Gastrocnemius medialis (tissue), 4 donors: ENCODE measurements at regions of chr11 and their contacts with region 1.

Region 1: GRCh38 chr11:17978553-17979287 is 34.1 kb downstream of the SERGEF start:
- DNase-seq: peak; percentile 12 to 68
- ATAC-seq: peak; percentile 81 to 88
- H3K4me3 ChIP-seq: no peak overlapping the region
- H3K27ac ChIP-seq: no peak overlapping the region
- H3K4me1 ChIP-seq: peaks cover 0 to 5% of the 10 kb centered on the region in 2 donors
- H3K27me3 ChIP-seq: no peaks in the 10 kb centered on the region
- CTCF ChIP-seq: peak; percentile 65 to 80 (median 73)
- POLR2A ChIP-seq: no peak

Region 2: GRCh38 chr11:17598700-17599459 is 379.8 kb before region 1 on chr11:
- in situ Hi-C with region 1: loop called (anchors 5 to 10 kb)
- intact Hi-C with region 1: loop called (anchors 2 kb)
- DNase-seq: peak; percentile 54 to 62
- ATAC-seq: peak; percentile 87 to 90
- H3K4me3 ChIP-seq: no peak overlapping the region
- H3K27ac ChIP-seq: no peak overlapping the region
- H3K4me1 ChIP-seq: peaks cover 0 to 3% of the 10 kb centered on the region in 2 donors
- H3K27me3 ChIP-seq: no peaks in the 10 kb centered on the region
- CTCF ChIP-seq: peak; percentile 90 to 97 (median 96)
- POLR2A ChIP-seq: no peak

Region 3: DNA sequence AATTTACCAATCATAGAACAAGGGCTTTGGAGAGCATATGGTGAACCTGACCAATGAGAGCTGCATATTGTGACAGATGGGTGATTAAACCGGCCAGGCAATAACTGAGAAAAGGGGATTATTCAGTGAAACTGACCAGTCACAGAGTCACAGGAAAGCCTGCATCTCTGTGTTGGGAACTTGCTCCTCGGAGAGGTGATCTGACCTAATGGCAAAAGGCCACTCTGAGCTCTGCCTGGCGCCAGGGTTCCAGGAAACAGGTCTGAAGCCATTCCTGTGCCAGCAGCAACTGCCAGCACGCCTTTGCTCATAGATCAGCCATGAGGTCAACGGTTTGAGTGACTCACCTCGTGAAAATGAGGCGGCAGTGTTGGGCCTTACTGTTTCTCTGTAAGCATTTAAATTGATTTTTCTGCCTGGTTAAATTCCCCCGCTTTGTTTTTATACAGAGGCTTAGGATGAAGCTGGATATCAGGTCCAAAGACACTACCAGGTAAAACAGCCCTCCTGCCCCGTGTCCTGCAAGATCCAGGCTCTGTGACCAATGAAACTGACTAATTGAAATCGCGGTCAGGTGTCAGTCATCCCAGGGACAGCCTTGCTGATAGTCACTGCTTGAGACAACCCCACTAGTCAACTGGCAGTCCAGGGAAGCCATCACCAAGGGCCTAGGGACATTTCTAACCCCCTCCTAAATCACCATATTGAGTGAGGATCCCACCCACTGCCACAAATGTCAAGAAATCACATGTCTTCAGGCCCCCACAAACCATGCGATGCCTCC is 295.1 kb before region 1 on chr11:
- in situ Hi-C with region 1: no loop called
- intact Hi-C with region 1: no loop called
- DNase-seq: peak; percentile 58 to 87
- ATAC-seq: peak; percentile 69 to 71
- H3K4me3 ChIP-seq: no peak overlapping the region
- H3K27ac ChIP-seq: peak overlapping the region; percentile 80 to 87 (median 82)
- H3K4me1 ChIP-seq: peaks cover 56 to 61% of the 10 kb centered on the region in 2 donors
- H3K27me3 ChIP-seq: no peaks in the 10 kb centered on the region
- CTCF ChIP-seq: no peak
- POLR2A ChIP-seq: peak in 1 of 2 donors; percentile 26

Region 4: DNA sequence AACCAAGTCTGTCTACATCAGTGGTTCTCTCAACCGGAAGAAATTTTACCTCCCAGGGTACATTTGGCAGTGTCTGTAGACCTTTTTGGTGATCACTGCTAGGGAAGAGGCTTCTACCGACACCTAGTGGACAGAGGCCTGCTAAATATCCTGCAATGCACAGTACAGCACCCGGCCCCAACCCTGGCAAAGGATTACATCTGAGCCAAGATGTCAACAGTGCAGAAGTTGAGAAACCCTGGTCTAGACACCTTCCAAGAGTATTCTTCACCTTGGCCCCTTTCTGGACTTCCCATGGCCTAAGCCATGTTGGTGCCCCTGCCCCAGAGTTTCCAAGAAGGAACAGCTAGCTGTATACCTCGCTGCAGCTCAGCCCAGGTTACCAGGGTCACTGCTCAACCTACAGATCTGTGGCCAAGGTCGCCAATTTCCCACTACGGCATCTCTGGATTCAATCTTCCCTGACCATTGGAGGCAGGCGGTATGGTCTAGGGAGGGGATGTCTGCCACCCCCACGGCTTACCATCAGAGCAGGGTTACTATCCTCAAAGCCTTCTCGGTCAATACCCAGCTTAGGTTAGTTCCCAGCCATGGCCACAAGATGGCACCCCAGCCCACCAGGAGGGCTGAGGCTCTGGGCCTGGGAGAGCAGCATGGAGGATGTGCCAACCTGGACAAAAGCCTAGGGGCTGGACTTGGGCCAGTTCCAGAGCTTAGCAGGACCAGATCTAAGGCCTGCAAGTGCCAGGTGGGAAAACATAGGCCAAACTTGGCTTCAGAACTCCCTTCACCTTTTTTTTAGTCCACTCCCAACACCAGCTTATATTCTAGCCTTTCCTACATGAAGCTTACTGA is 247.9 kb before region 1 on chr11:
- in situ Hi-C with region 1: loop called (anchors 5 to 10 kb)
- intact Hi-C with region 1: loop called (anchors 1 kb)
- DNase-seq: peak; percentile 64 to 90
- ATAC-seq: peak; percentile 87 to 88
- H3K4me3 ChIP-seq: no peak overlapping the region
- H3K27ac ChIP-seq: peak overlapping the region; percentile 2 to 71 (median 34)
- H3K4me1 ChIP-seq: peaks cover 9 to 15% of the 10 kb centered on the region in 2 donors
- H3K27me3 ChIP-seq: peaks cover 3 to 5% (median 4%) of the 10 kb centered on the region in 3 donors
- CTCF ChIP-seq: peak; percentile 75 to 92 (median 87)
- POLR2A ChIP-seq: no peak

Region 5: GRCh38 chr11:17750013-17750800 is 228.5 kb before region 1 on chr11:
- in situ Hi-C with region 1: loop called in 2 of 4 experiments (anchors 10 kb)
- intact Hi-C with region 1: no loop called
- DNase-seq: no peak
- ATAC-seq: peak in 1 of 2 donors; percentile 51
- H3K4me3 ChIP-seq: no peak overlapping the region
- H3K27ac ChIP-seq: peak overlapping the region in 3 of 4 donors; percentile 13 to 60 (median 18)
- H3K4me1 ChIP-seq: peaks cover 36 to 47% of the 10 kb centered on the region in 2 donors
- H3K27me3 ChIP-seq: no peaks in the 10 kb centered on the region
- CTCF ChIP-seq: no peak
- POLR2A ChIP-seq: no peak

Region 6: DNA sequence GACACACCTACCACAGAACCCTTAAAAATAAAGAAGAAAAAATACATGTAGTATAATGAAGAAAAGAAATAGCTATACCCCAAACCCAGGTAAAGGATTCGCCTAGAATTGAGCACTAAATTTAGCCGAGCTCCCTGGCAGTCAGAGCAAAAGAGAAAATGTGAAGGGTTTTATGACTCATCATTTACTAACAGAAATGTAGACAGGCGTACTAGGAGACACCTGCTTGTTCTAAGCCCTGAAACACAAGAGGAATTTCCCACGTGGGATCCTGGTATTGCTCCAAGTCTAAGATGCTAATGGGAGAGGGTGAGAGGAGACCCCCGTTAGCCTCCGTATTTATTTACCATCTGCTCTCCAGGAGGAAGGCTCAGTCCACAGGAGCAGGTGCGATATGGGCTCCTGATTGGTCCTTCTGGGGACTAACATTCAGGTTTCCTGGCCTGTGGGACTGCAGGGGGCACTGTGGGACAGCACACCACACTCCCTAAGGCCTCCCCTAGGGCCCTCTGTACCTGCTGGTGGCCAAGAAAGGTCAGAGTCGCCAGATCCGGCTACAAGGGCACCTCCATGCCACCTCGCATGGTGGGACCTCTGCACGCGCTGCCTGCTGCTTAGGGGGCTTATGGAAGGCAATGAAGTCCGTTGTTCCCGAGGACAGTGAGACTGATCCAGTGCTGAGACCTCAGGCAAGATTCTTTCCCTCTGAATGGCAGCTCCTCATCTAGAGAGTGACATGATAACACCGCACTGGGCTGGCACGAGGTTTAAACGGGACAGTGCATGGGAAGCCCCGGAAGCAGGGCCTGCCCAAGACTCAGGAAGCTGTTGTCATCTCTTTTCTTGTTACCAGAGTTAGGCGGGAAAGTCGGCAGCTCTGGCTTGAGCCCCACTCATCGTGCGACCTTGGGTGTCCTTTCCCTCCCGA is 218.4 kb before region 1 on chr11:
- in situ Hi-C with region 1: loop called in 3 of 4 experiments (anchors 10 kb)
- intact Hi-C with region 1: loop called (anchors 1 kb)
- DNase-seq: peak in 1 of 2 donors; percentile 69
- ATAC-seq: peak; percentile 81 to 83
- H3K4me3 ChIP-seq: no peak overlapping the region
- H3K27ac ChIP-seq: no peak overlapping the region
- H3K4me1 ChIP-seq: no peaks in the 10 kb centered on the region
- H3K27me3 ChIP-seq: no peaks in the 10 kb centered on the region
- CTCF ChIP-seq: peak; percentile 63 to 76 (median 69)
- POLR2A ChIP-seq: no peak

Region 7: DNA sequence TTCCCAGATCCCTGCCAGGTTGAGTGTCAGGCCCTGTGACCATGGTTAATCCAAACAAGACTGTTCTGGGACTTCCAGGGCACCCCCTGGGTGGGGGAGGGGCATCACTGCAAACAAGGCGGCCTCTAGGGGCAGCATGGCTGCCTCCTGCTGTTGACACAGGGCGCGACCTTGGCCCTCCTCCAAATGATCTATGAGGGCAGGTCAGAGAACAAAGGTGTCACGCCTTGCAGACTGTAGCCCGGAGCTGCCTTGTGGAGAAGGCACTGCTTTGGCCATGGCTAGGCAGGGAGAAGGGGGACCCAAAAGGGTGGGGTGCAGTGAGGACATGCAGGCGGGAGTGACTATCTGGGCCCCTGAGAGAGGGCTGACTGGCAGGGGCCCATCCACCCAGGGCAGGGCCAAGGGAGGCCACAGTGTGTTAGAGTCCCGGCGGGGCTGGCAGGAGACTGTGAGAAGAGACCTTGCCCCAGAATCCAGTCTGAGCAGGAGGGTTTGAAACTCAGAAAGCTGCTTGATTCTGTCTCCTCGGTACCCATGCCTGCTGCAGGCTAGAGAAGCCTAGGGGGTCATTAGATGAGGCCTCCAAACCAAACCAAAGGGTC is 208.6 kb before region 1 on chr11:
- in situ Hi-C with region 1: loop called in 1 of 4 experiments (anchors 10 kb)
- intact Hi-C with region 1: loop called (anchors 1 kb)
- DNase-seq: no peak
- ATAC-seq: no peak
- H3K4me3 ChIP-seq: no peak overlapping the region
- H3K27ac ChIP-seq: no peak overlapping the region
- H3K4me1 ChIP-seq: no peaks in the 10 kb centered on the region
- H3K27me3 ChIP-seq: no peaks in the 10 kb centered on the region
- CTCF ChIP-seq: no peak
- POLR2A ChIP-seq: no peak

Region 8: GRCh38 chr11:17855531-17856290 is 123.0 kb before region 1 on chr11:
- in situ Hi-C with region 1: loop called in 2 of 4 experiments (anchors 10 kb)
- intact Hi-C with region 1: loop called (anchors 5 kb)
- DNase-seq: no peak
- ATAC-seq: no peak
- H3K4me3 ChIP-seq: no peak overlapping the region
- H3K27ac ChIP-seq: no peak overlapping the region
- H3K4me1 ChIP-seq: peaks cover 17% of the 10 kb centered on the region in 2 donors
- H3K27me3 ChIP-seq: no peaks in the 10 kb centered on the region
- CTCF ChIP-seq: no peak
- POLR2A ChIP-seq: no peak